Activated naive CD4-positive, alpha-beta T cell treated with anti-CD3 and anti-CD28 coated beads, Interleukin-2, amount 10 ng/mL, durations not matched to agents 7 days and 5 days (primary cell): ENCODE measurements at regions of chr5 and their contacts with region 1.

Region 1: DNA sequence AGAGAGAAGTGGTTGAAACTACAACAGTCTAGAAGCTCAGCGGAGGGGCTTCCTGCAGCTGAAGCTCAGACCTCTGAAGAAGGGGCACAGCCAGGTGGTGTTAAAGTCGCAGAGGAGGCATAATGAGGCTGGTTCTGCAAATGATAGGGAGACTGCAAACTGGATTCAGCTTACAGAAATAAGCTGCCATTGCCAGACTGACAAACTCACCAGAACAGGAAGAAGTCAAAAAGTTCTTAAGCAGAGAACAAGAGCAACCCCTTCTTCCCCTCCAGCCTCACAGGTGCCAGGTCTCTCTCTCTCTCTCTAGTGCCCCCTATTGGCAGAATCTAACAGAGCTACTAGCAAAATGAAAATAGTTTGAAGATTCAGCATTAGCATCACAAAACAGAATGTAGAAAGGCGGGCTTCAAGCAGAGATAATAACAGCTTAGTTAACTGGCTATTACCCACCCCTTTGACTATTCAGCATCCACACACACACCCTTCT is 76.7 kb downstream of the GRAMD2B start:
- DNase-seq: peak; percentile 43
- H3K4me3 Mint-ChIP-seq: no peak overlapping the region
- H3K27ac Mint-ChIP-seq: peak overlapping the region; percentile 2
- H3K4me1 Mint-ChIP-seq: peaks cover 6% of the 10 kb centered on the region
- H3K27me3 Mint-ChIP-seq: no peaks in the 10 kb centered on the region

Region 2: GRCh38 chr5:126354012-126354857 is 145.7 kb before region 1 on chr5:
- CTCF ChIA-PET with region 1: interaction called, 126 read pairs
- DNase-seq: no peak
- H3K4me3 Mint-ChIP-seq: no peak overlapping the region
- H3K27ac Mint-ChIP-seq: no peak overlapping the region
- H3K4me1 Mint-ChIP-seq: peaks cover 14% of the 10 kb centered on the region
- H3K27me3 Mint-ChIP-seq: peaks cover 4% of the 10 kb centered on the region

Region 3: DNA sequence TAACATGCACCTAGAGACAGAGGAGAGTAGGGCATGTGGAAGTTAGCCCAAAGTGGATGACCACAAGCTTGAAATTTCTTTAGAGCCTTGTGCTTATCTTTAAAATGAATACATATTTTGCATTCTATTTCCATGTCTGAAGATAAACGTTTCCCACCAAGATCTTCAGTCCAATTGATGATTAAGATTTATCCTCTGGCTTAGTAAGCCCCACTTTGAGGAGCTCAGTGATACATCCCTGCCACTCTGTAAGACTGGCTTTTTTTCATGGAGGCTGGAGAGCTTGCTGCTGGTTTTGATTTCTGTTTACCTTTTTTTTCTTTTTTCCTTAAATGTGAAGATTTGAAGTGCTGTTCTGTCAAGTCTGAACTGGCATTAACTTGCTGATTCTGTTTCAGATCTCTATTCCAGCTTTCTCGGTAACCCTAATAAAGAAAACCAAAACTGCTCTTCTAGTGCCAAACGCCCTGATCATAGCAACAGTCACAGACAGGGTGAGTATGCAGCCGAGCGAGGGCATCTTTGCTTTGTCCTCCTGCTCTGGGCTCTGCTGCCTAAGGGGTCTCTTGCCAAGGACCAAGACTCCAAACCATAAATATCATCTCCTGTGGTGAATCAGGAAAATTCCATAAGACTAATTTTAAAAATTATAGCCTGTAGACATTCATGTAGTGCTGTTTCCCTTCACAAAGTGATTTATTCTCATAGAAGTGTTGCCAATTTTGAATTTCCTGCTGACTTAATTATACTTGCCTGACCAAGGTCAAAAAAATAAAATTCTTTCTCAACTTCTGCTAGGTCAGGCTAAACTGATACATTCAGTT is 22.4 kb before region 1 on chr5:
- CTCF ChIA-PET with region 1: interaction called, 12 read pairs
- DNase-seq: no peak
- H3K4me3 Mint-ChIP-seq: no peak overlapping the region
- H3K27ac Mint-ChIP-seq: no peak overlapping the region
- H3K4me1 Mint-ChIP-seq: no peaks in the 10 kb centered on the region
- H3K27me3 Mint-ChIP-seq: no peaks in the 10 kb centered on the region

Region 4: GRCh38 chr5:126519634-126520592 is 20.0 kb after region 1 on chr5:
- CTCF ChIA-PET with region 1: interaction called, 26 read pairs
- DNase-seq: no peak
- H3K4me3 Mint-ChIP-seq: no peak overlapping the region
- H3K27ac Mint-ChIP-seq: no peak overlapping the region
- H3K4me1 Mint-ChIP-seq: no peaks in the 10 kb centered on the region
- H3K27me3 Mint-ChIP-seq: peaks cover 7% of the 10 kb centered on the region

Region 5: DNA sequence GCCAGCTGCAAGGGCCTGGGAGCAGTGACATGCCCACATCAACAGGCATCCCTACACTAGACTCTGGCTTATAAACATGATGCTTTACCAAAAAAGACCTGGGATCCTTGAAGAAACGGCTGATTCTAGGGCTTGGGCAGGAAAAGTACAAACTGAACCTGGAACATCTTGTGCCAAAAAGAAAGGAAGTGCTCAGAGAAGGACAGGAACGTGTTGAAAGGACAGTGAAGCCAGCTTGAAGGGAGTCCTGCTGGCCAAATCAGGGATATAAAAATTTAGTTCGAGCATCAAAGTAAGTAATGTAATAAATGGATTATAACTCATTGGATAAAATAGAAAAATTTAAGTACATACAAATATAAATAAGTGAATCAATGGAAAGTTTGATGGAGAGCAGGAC is 37.0 kb after region 1 on chr5:
- CTCF ChIA-PET with region 1: interaction called, 27 read pairs
- DNase-seq: no peak
- H3K4me3 Mint-ChIP-seq: no peak overlapping the region
- H3K27ac Mint-ChIP-seq: no peak overlapping the region
- H3K4me1 Mint-ChIP-seq: no peaks in the 10 kb centered on the region
- H3K27me3 Mint-ChIP-seq: peaks cover 5% of the 10 kb centered on the region

Region 6: GRCh38 chr5:126624534-126624933 is 124.6 kb after region 1 on chr5:
- CTCF ChIA-PET with region 1: no interaction called
- DNase-seq: no peak
- H3K4me3 Mint-ChIP-seq: no peak overlapping the region
- H3K27ac Mint-ChIP-seq: no peak overlapping the region
- H3K4me1 Mint-ChIP-seq: peaks cover 8% of the 10 kb centered on the region
- H3K27me3 Mint-ChIP-seq: no peaks in the 10 kb centered on the region